ENCODE measurements at regions of chr1 and their contacts with region 1.

Region 1: DNA sequence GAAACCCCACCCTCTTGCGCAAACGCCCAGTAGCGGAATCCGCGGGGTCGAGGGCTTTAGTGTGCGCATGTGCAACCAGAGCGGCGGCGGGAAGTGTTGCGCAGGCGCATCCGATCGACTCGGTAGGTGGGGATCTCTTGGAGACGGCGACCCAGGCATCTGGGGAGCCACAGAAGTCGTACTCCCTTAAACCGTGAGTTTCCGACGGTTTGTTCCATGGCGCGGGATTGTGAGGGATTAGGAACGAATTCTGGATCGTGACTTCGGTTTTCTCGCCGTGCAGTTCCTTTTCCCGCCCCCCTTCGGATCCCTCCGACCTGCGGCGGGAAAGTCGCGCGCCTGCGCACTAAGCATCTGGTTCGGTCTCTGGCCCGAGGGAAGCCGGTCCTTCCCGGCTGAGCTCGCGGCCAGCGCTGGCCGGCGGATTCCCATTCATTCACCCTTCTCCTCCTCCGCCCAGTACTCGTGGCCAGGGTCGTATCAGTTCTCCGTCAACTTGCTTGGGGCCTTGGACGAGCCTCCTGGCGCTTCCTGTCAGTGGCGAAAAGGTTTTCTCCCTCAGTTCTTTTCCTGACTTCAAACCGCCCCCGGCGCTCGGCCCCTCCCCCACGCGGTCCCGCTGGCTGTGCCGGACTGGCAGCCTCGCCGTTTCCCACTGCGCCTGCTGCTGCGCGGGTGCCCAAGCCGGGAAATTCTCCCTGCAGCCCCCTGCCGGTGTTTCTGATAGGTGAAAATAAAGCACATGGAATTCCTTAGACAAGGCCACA is at the start of gene CDC7:
- DNase-seq: peak; percentile 81 to 97 (median 88)

Region 2: GRCh38 chr1:91282695-91283420 is 218.1 kb before region 1 on chr1:
- intact Hi-C with region 1: loop called (anchors 5 kb)
- DNase-seq: peak in 8 of 10 donors; percentile 40 to 90 (median 55)

Region 3: DNA sequence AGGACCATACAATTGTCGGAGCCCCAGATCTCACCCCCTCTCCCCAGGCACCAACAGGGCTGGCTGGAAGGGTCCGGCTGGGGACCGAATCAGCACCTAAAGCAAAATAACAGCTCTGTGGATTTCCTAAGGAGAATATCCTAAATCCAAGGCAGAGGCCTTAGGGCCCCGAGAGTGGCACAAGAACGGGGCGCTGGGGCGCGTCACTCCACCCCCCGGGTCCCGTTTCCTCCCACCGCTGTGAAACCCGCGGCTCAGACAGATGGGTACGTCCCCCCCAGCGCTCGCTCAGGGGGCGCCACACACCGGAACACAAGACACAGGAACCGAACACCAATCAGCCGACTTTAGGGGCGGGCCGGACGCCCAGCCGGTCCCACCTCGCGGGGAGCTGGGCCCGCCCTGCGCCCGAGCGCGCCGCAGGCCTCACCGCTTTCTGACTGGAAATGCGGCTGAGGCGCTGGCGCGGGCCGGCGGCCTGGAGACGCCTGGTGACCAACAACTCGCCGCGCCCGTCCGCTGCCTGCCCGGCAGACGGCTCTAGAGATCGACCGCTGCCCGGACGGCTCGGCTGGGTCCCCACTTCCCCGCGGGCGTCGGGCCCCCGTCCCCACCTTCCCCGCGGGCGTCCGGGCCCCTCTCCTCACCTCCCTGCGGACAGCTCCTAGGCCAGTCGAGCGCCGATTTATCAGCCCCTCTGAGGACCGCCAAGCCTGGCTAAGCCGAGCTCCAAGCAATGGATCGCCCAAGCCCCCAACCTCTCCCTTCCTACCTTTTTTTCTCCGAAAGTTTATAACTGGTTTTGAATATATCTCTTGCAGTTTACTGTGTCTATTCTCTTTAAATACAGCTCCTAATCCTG is 96.6 kb before region 1 on chr1 and contains the start of gene HFM1:
- intact Hi-C with region 1: loop called (anchors 1 kb)
- DNase-seq: peak; percentile 35 to 96 (median 78)

Region 4: GRCh38 chr1:91635763-91636162 is 134.8 kb after region 1 on chr1:
- intact Hi-C with region 1: no loop called
- DNase-seq: no peak

Measured in posterior cingulate gyrus (tissue), 11 donors.